Activated naive CD8-positive, alpha-beta T cell treated with anti-CD3 and anti-CD28 coated beads, Interleukin-2, amount 10 ng/mL, durations not matched to agents 7 days and 5 days (primary cell): ENCODE measurements at regions of chr6 and their contacts with region 1.

Region 1: GRCh38 chr6:107033126-107033525 is 5.1 kb downstream of the MTRES1 start:
- DNase-seq: no peak
- ATAC-seq: no peak
- H3K4me3 Mint-ChIP-seq: no peak overlapping the region
- H3K27ac Mint-ChIP-seq: no peak overlapping the region
- H3K4me1 Mint-ChIP-seq: peaks cover 18% of the 10 kb centered on the region
- H3K27me3 Mint-ChIP-seq: no peaks in the 10 kb centered on the region

Region 2: GRCh38 chr6:107114213-107114905 is 81.2 kb after region 1 on chr6:
- POLR2A ChIA-PET with region 1: interaction called, 11 read pairs
- DNase-seq: peak; percentile 88
- ATAC-seq: peak; percentile 71
- H3K4me3 Mint-ChIP-seq: peak overlapping the region; percentile 79
- H3K27ac Mint-ChIP-seq: peak overlapping the region; percentile 45
- H3K4me1 Mint-ChIP-seq: peaks cover 14% of the 10 kb centered on the region
- H3K27me3 Mint-ChIP-seq: peaks cover 23% of the 10 kb centered on the region